Activated naive CD4-positive, alpha-beta T cell treated with anti-CD3 and anti-CD28 coated beads for 36 hours (primary cell): ENCODE measurements at regions of chr15 and their contacts with region 1.

Region 1: GRCh38 chr15:56918046-56918938 is at the start of gene TCF12:
- DNase-seq: peak; percentile 90
- H3K4me3 Mint-ChIP-seq: peak within 1 kb of the TSS; percentile 96
- H3K27ac Mint-ChIP-seq: peak within 1 kb of the TSS; percentile 93
- H3K4me1 Mint-ChIP-seq: peaks cover 29% of the 10 kb centered on the region
- H3K27me3 Mint-ChIP-seq: no peaks in the 10 kb centered on the region
- total RNA-seq, gene TCF12: 65.7 to 70.7 TPM

Region 2: GRCh38 chr15:56886932-56887781 is 31.1 kb before region 1 on chr15:
- CTCF ChIA-PET with region 1: no interaction called
- intact Hi-C with region 1: loop called (anchors 1 kb)
- DNase-seq: peak; percentile 84
- H3K4me3 Mint-ChIP-seq: peak overlapping the region; percentile 76
- H3K27ac Mint-ChIP-seq: peak overlapping the region; percentile 78
- H3K4me1 Mint-ChIP-seq: peaks cover 20% of the 10 kb centered on the region
- H3K27me3 Mint-ChIP-seq: no peaks in the 10 kb centered on the region

Region 3: GRCh38 chr15:56957812-56958406 is 39.6 kb after region 1 on chr15:
- CTCF ChIA-PET with region 1: no interaction called
- intact Hi-C with region 1: loop called (anchors 5 kb)
- DNase-seq: no peak
- H3K4me3 Mint-ChIP-seq: no peak overlapping the region
- H3K27ac Mint-ChIP-seq: no peak overlapping the region
- H3K4me1 Mint-ChIP-seq: peaks cover 28% of the 10 kb centered on the region
- H3K27me3 Mint-ChIP-seq: no peaks in the 10 kb centered on the region

Region 4: GRCh38 chr15:56996746-56997470 is 78.6 kb after region 1 on chr15:
- CTCF ChIA-PET with region 1: no interaction called
- intact Hi-C with region 1: no loop called
- DNase-seq: no peak
- H3K4me3 Mint-ChIP-seq: no peak overlapping the region
- H3K27ac Mint-ChIP-seq: no peak overlapping the region
- H3K4me1 Mint-ChIP-seq: peaks cover 11% of the 10 kb centered on the region
- H3K27me3 Mint-ChIP-seq: no peaks in the 10 kb centered on the region

Region 5: DNA sequence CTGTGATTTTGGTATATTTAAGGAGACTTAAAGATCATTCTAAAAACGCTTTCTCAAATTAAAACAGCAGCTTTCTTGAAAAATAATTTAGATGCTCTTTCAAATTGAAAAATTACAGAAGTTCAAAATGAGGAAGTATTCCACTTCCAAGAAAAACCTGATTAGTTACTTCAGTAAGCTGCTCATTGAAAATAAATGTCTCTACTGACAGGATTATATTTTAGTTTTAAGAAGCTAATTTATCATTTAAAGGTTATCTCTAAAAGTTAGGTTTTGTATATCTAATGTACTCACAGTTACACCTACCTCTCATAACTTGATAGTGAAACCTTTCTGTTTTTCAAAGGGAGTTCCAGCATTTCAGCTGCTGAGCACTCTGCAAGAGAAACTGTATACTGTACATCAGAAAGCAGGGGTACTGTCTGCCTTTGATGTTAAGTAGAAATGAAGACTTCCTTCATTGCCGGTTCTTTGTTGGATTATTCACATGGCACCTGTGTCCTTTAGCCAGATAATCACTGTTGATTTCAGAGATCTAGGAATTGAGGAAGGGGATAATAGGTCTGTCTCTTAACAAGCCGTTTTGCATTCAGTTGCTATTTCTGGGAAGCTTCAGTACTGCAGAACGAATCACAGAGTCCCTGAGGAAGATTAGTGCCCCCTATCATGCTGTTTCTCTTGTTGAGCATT is 161.8 kb after region 1 on chr15:
- CTCF ChIA-PET with region 1: no interaction called
- intact Hi-C with region 1: loop called (anchors 5 kb)
- DNase-seq: no peak
- H3K4me3 Mint-ChIP-seq: no peak overlapping the region
- H3K27ac Mint-ChIP-seq: no peak overlapping the region
- H3K4me1 Mint-ChIP-seq: peaks cover 19% of the 10 kb centered on the region
- H3K27me3 Mint-ChIP-seq: no peaks in the 10 kb centered on the region

Region 6: DNA sequence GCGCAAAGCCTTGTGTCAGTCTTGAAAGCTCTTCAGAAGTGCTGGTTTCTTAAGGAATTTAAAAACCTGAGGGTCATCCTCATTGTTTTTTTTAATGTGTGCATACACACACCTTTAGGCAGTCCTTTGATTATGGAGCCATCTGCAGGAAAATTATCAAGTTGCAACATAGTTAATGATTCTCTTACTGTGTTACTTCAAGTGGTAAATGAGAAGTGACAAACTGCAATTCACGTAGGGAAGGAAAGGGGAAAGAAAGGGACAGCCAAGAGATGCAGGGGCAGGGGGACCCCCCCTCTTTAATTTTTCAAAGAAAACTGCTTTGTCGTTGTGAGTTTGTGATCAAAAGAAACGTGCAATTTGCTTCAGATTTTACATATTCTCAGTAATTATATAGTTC is 295.6 kb after region 1 on chr15:
- CTCF ChIA-PET with region 1: no interaction called
- intact Hi-C with region 1: loop called (anchors 5 kb)
- DNase-seq: no peak
- H3K4me3 Mint-ChIP-seq: no peak overlapping the region
- H3K27ac Mint-ChIP-seq: no peak overlapping the region
- H3K4me1 Mint-ChIP-seq: peaks cover 25% of the 10 kb centered on the region
- H3K27me3 Mint-ChIP-seq: no peaks in the 10 kb centered on the region